ENCODE measurements at regions of chr11 and their contacts with region 1.

Region 1: DNA sequence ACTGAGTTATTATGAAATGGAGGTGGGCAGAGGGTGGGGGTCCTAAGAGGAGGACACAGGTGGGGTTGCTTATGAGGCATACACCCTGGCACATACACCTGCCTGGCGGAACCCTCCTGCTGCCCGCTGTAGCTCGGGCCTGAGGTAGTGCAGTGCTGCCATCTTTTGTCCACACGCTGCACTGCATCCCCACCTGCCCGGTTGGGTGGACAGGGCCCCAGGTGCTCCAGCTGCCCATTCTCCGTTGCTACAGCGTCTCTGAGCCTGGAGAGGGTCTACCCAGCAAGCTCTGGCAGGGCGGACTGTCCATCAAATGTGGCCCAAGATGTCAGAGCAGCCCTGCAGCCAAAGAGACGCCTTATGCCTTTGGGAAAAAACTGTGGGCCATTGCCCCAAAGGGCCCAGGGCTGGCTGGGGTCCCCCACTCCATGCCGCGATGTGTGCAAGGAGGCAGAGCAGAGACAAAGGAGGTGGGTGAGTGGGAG is 131.2 kb downstream of the BUD13 start:
- DNase-seq: peak; percentile 17
- ATAC-seq: peak; percentile 93
- H3K4me3 ChIP-seq: no peak overlapping the region
- H3K27ac ChIP-seq: no peak overlapping the region
- H3K4me1 ChIP-seq: no peaks in the 10 kb centered on the region
- H3K27me3 ChIP-seq: peaks cover 2% of the 10 kb centered on the region
- CTCF ChIP-seq: peak; percentile 97

Region 2: DNA sequence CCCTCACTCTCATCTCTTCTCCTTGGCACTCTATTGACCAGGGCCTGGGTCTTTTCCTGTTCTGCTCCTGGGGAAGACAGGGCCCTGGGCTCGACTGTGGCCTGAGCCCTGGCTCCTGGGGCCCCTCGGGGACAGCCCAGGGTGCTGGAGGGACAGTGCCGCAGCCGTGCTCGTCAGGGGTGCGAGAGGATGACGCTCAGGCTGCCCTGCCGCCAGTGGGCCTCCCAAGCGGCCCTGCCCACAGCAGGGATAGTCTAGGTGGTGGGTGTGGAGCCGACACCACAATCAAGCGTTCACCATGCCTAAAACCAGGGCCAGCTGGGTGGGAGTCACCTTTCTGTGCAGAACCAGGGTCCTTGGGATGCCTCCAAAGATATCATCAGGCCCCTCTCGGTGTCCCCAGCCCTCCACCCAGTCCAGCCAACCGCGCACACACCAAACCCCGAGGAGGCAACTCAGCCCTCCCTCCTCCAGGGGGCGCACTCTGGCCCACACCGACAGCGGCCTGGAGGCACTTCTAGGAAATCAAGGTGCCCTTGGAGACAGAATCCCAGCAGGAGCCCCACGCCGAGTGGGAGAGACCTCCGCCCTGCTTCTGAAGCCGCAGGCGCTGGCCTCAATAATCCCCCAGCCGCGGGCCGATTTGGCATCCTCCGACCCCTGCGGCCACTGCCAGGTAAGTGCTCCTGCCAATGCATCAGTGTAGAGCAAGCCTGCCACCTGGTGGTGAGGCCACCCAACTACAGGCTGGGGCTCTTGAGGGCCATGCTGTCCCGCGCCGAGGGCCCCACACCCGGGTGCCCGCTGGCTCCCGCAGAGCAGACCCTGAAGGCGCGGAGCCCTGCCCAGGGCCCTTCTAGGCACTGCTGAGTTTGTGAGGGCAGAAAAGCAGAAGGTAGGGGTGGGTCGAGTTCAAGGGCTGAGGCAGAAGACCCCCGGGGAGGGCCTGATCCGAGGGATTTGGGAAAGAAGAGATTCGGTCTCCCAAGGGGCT is 365.3 kb before region 1 on chr11:
- CTCF ChIA-PET with region 1: interaction called, 6 read pairs
- POLR2A ChIA-PET with region 1: no interaction called
- in situ Hi-C with region 1: no loop called
- intact Hi-C with region 1: loop called (anchors 5 kb)
- DNase-seq: peak; percentile 28
- ATAC-seq: peak; percentile 95
- H3K4me3 ChIP-seq: no peak overlapping the region
- H3K27ac ChIP-seq: no peak overlapping the region
- H3K4me1 ChIP-seq: 0 out of 2 replicates have a peak, but pooled peaks cover 2% of the 10 kb centered on the region
- H3K27me3 ChIP-seq: no peaks in the 10 kb centered on the region; the same call in 1 of the 2 replicates
- CTCF ChIP-seq: peak; percentile 98

Region 3: GRCh38 chr11:116454020-116454645 is 187.5 kb before region 1 on chr11:
- CTCF ChIA-PET with region 1: no interaction called
- POLR2A ChIA-PET with region 1: no interaction called
- in situ Hi-C with region 1: no loop called
- intact Hi-C with region 1: loop called (anchors 2 kb)
- DNase-seq: peak; percentile 25
- ATAC-seq: peak; percentile 80
- H3K4me3 ChIP-seq: no peak overlapping the region
- H3K27ac ChIP-seq: no peak overlapping the region
- H3K4me1 ChIP-seq: no peaks in the 10 kb centered on the region
- H3K27me3 ChIP-seq: peaks cover 5% of the 10 kb centered on the region; the same call in 1 of the 2 replicates
- CTCF ChIP-seq: peak; percentile 78

Region 4: DNA sequence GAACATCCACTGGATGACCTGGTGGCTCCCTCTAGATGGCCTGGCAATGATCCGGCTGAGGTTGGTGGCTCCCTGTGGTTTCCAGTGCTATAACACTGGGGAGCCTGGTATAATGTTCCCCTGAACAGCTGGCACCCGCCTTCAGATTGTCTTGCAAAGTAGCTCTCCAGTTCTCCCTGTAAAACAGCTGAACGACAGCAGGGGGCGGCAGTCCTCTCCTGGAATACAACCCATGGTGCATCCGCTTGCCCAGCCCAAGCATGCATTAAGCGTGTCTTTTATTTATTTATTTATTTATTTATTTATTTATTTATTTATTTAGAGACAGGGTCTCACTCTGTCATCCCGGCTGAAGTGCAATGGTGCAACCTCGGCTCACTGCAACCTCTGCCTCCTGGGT is 127.7 kb before region 1 on chr11:
- CTCF ChIA-PET with region 1: interaction called, 10 read pairs
- POLR2A ChIA-PET with region 1: no interaction called
- in situ Hi-C with region 1: no loop called
- intact Hi-C with region 1: loop called (anchors 1 kb)
- DNase-seq: no peak
- ATAC-seq: peak; percentile 72; the same call in 1 of the 2 replicates
- H3K4me3 ChIP-seq: no peak overlapping the region
- H3K27ac ChIP-seq: no peak overlapping the region
- H3K4me1 ChIP-seq: no peaks in the 10 kb centered on the region
- H3K27me3 ChIP-seq: no peaks in the 10 kb centered on the region; the same call in 1 of the 2 replicates
- CTCF ChIP-seq: peak; percentile 31; the same call in 1 of the 2 replicates

Region 5: GRCh38 chr11:117026593-117027330 is 385.2 kb after region 1 on chr11:
- CTCF ChIA-PET with region 1: no interaction called
- POLR2A ChIA-PET with region 1: no interaction called
- in situ Hi-C with region 1: no loop called
- intact Hi-C with region 1: no loop called
- DNase-seq: no peak
- ATAC-seq: no peak
- H3K4me3 ChIP-seq: no peak overlapping the region
- H3K27ac ChIP-seq: no peak overlapping the region
- H3K4me1 ChIP-seq: peaks cover 7% of the 10 kb centered on the region
- H3K27me3 ChIP-seq: no peaks in the 10 kb centered on the region
- CTCF ChIP-seq: no peak

Measured in Panc1 (cell line).